ENCODE measurements at regions of chr9 and their contacts with region 1.

Region 1: DNA sequence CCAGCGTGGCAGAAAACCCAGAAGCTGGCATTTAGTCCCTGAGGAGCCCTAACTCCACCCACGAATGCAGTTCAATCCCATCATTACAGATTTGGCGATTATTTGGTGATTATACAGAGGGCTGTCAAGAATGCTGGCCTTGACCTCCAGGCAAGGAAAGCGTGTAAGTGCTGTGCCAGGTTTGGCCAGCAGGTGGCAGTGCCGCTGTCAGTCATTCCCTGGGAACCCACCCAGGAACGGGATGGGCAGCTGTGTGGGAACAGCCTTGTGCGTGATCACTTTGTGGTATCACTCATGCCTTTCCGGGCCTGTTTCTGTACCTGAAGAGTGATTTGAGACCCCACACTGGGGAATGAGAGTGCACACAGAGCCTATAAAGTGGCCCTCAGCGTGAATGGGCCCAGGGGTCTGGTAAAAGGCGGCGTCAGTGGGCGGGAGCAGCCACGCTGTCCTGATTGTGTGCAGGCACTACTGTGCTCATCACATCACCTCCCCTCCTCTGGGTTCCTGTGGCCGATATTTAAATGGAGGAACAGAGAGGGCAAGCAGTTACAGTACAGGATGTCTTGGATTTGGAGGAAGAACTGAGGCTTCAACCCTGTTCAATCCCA is 215.6 kb downstream of the ROR2 start:
- DNase-seq: peak; percentile 88
- H3K4me3 ChIP-seq: no peak overlapping the region; a peak in 1 of 4 replicates
- H3K27ac ChIP-seq: no peak overlapping the region
- H3K4me1 ChIP-seq: peaks cover 0 to 22% of the 10 kb centered on the region in 2 experiments; a peak in 2 of 4 replicates
- H3K27me3 ChIP-seq: peaks cover 10% of the 10 kb centered on the region; the same call in 1 of the 2 replicates
- CTCF ChIP-seq: peak; percentile 92
- EP300 ChIP-seq: no peak
- RAD21 ChIP-seq: peak; percentile 69

Region 2: DNA sequence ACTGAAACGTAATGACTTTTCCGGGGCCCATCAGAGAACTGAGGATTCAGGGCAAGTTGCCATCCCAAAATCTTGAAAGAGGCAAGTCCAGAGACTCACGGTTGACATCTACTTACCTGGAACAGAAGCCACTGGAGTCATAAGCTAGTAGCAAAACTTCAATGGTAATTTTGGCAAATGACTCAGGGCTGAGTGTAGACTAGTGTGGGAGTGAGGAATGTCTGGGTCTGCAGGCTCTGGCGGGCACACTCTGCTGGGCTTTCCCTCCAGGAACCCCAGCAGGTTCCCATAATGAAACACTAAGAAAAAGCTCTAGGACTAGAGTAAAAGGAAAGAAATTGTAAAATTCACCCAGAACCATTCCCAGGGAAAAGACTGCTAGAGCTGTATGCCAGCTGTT is 187.9 kb before region 1 on chr9:
- CTCF ChIA-PET with region 1: no interaction called
- POLR2A ChIA-PET with region 1: no interaction called
- DNase-seq: no peak
- H3K4me3 ChIP-seq: no peak overlapping the region
- H3K27ac ChIP-seq: no peak overlapping the region; a peak in 1 of 4 replicates
- H3K4me1 ChIP-seq: no peaks in the 10 kb centered on the region
- H3K27me3 ChIP-seq: no peaks in the 10 kb centered on the region
- CTCF ChIP-seq: no peak
- EP300 ChIP-seq: no peak
- RAD21 ChIP-seq: no peak

Region 3: GRCh38 chr9:91714874-91715615 is 19.4 kb before region 1 on chr9:
- CTCF ChIA-PET with region 1: interaction called, 16 read pairs
- POLR2A ChIA-PET with region 1: no interaction called
- DNase-seq: no peak
- H3K4me3 ChIP-seq: no peak overlapping the region
- H3K27ac ChIP-seq: no peak overlapping the region
- H3K4me1 ChIP-seq: peaks cover 0 to 9% of the 10 kb centered on the region in 2 experiments; a peak in 3 of 4 replicates
- H3K27me3 ChIP-seq: no peaks in the 10 kb centered on the region
- CTCF ChIP-seq: no peak
- EP300 ChIP-seq: no peak
- RAD21 ChIP-seq: no peak

Region 4: DNA sequence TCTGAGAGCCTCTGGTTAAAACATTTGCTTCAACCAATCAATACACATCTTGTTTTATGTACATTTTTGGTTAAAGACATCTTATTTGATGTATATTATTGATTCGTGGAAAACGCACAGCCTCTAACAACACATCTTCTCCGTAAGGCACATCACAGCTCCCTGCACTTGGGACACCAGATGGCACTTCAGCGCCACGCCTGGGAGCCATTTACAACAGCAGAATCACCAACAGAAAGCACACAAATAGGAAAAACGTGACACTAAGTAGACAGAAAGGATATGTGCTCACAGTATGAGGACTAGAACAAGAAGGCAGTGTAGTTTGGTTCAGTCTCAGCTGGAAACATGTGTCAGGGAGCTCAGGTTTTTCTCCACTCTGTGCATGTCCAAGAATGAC is 15.9 kb after region 1 on chr9:
- CTCF ChIA-PET with region 1: interaction called, 25 read pairs
- POLR2A ChIA-PET with region 1: no interaction called
- DNase-seq: peak; percentile 58
- H3K4me3 ChIP-seq: no peak overlapping the region
- H3K27ac ChIP-seq: peak overlapping the region in 1 of 2 experiments; percentile 56; a peak in 1 of 4 replicates
- H3K4me1 ChIP-seq: peaks cover 0 to 8% of the 10 kb centered on the region in 2 experiments; a peak in 1 of 4 replicates
- H3K27me3 ChIP-seq: peaks cover 5% of the 10 kb centered on the region; the same call in 1 of the 2 replicates
- CTCF ChIP-seq: no peak
- EP300 ChIP-seq: no peak; a peak in 1 of 4 replicates
- RAD21 ChIP-seq: peak; percentile 82